Activated CD4-positive, alpha-beta memory T cell treated with anti-CD3 and anti-CD28 coated beads for 36 hours (primary cell): ENCODE measurements at regions of chr4 and their contacts with region 1.

Region 1: GRCh38 chr4:10116580-10117358 is at the start of gene WDR1:
- DNase-seq: peak; percentile 96
- H3K4me3 Mint-ChIP-seq: peak within 1 kb of the TSS; percentile 94
- H3K27ac Mint-ChIP-seq: peak within 1 kb of the TSS; percentile 97
- H3K4me1 Mint-ChIP-seq: peaks cover 57% of the 10 kb centered on the region
- H3K27me3 Mint-ChIP-seq: no peaks in the 10 kb centered on the region
- total RNA-seq, gene WDR1: 351 to 353 TPM

Region 2: GRCh38 chr4:9146967-9147366 is 969.8 kb before region 1 on chr4:
- CTCF ChIA-PET with region 1: no interaction called
- POLR2A ChIA-PET with region 1: no interaction called
- intact Hi-C with region 1: loop called (anchors 5 kb)
- DNase-seq: no peak
- H3K4me3 Mint-ChIP-seq: no peak overlapping the region
- H3K27ac Mint-ChIP-seq: no peak overlapping the region
- H3K4me1 Mint-ChIP-seq: peaks cover 3% of the 10 kb centered on the region
- H3K27me3 Mint-ChIP-seq: no peaks in the 10 kb centered on the region

Region 3: GRCh38 chr4:9691238-9692065 is 425.3 kb before region 1 on chr4:
- CTCF ChIA-PET with region 1: no interaction called
- POLR2A ChIA-PET with region 1: no interaction called
- intact Hi-C with region 1: loop called (anchors 1 kb)
- DNase-seq: peak; percentile 96
- H3K4me3 Mint-ChIP-seq: peak overlapping the region; percentile 80
- H3K27ac Mint-ChIP-seq: peak overlapping the region; percentile 80
- H3K4me1 Mint-ChIP-seq: peaks cover 21% of the 10 kb centered on the region
- H3K27me3 Mint-ChIP-seq: no peaks in the 10 kb centered on the region

Region 4: DNA sequence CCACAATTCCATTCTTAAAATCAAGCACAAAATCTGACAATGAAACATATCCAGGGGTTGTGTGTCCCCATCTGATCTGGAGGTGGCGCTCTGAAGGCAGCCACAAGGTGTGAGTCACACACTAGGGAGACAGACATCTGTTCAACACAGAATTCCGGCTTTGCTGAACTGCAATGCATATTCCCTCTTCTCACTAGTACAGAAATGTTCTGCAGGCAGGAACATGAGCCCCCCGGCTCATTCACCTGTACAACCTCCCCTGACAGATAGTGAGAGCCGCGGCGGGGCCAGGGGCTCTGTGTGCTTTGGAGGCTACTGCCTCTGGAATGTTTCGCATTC is 42.0 kb before region 1 on chr4:
- CTCF ChIA-PET with region 1: no interaction called
- POLR2A ChIA-PET with region 1: no interaction called
- intact Hi-C with region 1: no loop called
- DNase-seq: peak; percentile 34
- H3K4me3 Mint-ChIP-seq: no peak overlapping the region
- H3K27ac Mint-ChIP-seq: peak overlapping the region; percentile 56
- H3K4me1 Mint-ChIP-seq: peaks cover 11% of the 10 kb centered on the region
- H3K27me3 Mint-ChIP-seq: no peaks in the 10 kb centered on the region

Region 5: DNA sequence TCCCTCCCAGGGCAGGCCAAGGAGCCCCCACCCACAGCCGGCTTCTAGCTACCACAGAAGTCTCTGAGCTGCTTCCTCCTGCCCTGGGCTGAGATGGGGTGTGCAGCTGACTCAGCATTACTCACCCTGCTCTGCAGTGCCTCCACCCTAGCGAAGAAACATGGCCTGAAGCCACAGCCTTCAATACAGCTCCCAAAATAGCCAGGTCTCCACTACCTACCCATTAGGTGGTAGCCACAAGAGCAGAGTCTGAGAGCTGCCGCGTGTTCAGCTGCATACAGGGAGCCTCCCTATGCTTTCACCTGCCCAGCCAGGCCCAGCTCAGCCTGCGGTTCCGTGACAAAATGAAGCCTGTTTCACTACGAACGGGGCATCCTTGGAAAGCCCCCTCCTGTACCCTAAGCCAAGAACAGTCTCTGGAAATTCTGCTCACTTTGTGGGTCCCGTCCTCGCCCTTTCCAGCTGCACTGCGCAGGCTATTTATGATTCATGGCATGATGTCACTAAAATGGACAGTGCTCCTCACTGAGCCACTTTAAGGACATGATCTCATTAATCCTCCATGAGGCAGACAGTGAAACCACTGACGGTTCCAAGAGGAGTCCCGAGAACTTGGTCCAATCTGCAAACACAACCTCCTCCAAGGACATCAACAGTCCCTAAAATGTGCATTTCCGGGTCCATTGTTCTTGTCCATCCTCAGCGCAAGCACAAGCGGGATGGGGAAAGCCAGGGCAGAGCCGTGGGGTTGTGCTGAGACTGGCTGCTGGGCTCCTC is 20.4 kb before region 1 on chr4:
- CTCF ChIA-PET with region 1: interaction called, 20 read pairs
- POLR2A ChIA-PET with region 1: interaction called, 80 read pairs
- intact Hi-C with region 1: loop called (anchors 1 kb)
- DNase-seq: peak; percentile 91
- H3K4me3 Mint-ChIP-seq: peak overlapping the region; percentile 37
- H3K27ac Mint-ChIP-seq: peak overlapping the region; percentile 92
- H3K4me1 Mint-ChIP-seq: peaks cover 95% of the 10 kb centered on the region
- H3K27me3 Mint-ChIP-seq: no peaks in the 10 kb centered on the region

Region 6: GRCh38 chr4:10157478-10158332 is 40.9 kb after region 1 on chr4:
- CTCF ChIA-PET with region 1: interaction called, 5 read pairs
- POLR2A ChIA-PET with region 1: interaction called, 5 read pairs
- intact Hi-C with region 1: loop called (anchors 2 kb)
- DNase-seq: peak; percentile 62
- H3K4me3 Mint-ChIP-seq: no peak overlapping the region
- H3K27ac Mint-ChIP-seq: no peak overlapping the region
- H3K4me1 Mint-ChIP-seq: peaks cover 29% of the 10 kb centered on the region
- H3K27me3 Mint-ChIP-seq: no peaks in the 10 kb centered on the region

Region 7: GRCh38 chr4:10461091-10461849 is 344.5 kb after region 1 on chr4:
- CTCF ChIA-PET with region 1: interaction called, 3 read pairs
- POLR2A ChIA-PET with region 1: interaction called, 9 read pairs
- intact Hi-C with region 1: loop called (anchors 2 kb)
- DNase-seq: peak; percentile 78
- H3K4me3 Mint-ChIP-seq: peak overlapping the region; percentile 72
- H3K27ac Mint-ChIP-seq: no peak overlapping the region
- H3K4me1 Mint-ChIP-seq: peaks cover 25% of the 10 kb centered on the region
- H3K27me3 Mint-ChIP-seq: peaks cover 33% of the 10 kb centered on the region

Region 8: GRCh38 chr4:10762561-10762960 is 645.8 kb after region 1 on chr4:
- CTCF ChIA-PET with region 1: no interaction called
- POLR2A ChIA-PET with region 1: no interaction called
- intact Hi-C with region 1: no loop called
- DNase-seq: no peak
- H3K4me3 Mint-ChIP-seq: no peak overlapping the region
- H3K27ac Mint-ChIP-seq: no peak overlapping the region
- H3K4me1 Mint-ChIP-seq: no peaks in the 10 kb centered on the region
- H3K27me3 Mint-ChIP-seq: no peaks in the 10 kb centered on the region